Endothelial cell of umbilical vein (primary cell): ENCODE measurements at regions of chr3 and their contacts with region 1.

Region 1: DNA sequence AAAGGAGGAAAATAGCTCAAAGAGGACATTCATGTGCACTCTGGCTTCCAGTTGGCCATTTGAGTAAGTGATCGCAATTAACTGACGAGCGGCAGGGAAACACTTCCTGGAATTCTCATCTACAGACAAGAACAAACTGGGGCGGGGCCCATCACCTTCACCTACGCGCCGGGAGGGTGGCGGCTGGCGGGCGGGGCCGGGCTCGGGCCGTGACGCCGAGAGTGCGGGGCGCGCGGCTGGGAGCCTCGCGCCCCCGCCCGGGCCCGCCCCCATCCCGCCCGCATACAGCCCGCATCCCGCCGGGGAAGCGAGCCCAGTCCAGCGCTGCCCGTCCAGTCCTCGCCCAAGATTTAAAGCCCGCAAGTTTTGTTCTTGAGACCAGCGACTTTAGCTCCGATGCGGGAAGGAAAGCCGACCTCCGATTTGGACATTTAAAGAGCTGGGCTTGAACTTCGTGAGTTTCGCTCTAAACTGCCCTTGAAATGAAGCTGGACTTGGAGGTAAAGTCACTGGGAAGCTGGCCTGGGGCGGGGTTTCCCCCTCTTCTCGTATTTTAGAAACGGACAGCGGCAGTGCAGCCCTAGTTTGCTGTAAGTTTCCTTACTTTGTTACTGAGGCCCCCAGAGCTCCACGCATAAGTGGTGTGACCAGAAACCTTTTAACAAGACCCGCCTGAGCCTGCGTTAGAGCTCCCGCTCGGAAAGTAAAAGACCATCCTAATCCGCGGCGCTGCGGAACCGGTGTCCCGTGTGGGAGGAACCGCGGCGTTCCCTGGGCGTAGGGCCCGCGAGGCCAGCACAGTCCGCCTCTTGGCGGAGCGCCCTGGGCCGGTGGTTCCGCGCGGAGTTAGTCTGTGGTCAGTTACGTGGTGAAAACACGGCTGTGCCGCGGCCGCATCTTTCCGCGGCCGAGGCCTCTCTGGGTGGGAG is at the start of gene B3GNT5:
- DNase-seq: peak; percentile 71
- H3K4me3 ChIP-seq: peak within 1 kb of the TSS; percentile 51 to 75 (median 62)
- H3K27ac ChIP-seq: peak within 1 kb of the TSS; percentile 54
- H3K4me1 ChIP-seq: peaks cover 13% of the 10 kb centered on the region
- H3K27me3 ChIP-seq: no peaks in the 10 kb centered on the region
- CTCF ChIP-seq: no peak
- POLR2A ChIP-seq: no peak
- total RNA-seq, gene B3GNT5: 25.6 and 29.4 TPM in 2 replicates

Region 2: DNA sequence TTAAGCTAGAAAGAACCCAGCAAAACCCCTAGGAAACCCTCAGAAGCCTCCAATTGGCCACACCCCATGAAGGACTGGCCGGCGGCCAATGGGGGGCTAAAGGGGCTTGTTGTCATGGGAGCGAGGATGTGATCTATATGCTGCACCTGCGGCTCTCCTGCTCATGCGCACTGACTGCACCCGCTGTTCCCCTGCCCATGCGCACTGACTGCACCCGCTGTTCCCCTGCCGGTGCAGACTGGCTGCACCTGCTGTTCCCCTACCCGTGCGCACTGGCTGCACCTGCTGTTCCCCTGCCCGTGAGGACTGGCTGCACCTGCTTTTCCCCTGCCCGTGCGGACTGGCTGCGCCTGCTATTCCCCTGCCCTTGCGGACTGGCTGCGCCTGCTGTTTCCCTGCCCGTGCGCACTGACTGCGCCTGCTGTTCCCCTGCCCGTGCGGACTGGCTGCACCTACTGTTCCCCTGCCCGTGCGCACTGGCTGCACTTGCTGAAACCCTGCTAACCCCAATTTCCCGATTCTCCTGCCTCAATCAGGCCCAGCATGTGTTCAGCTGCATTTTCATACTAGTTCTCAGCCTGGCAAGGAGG is 137.1 kb before region 1 on chr3:
- CTCF ChIA-PET with region 1: no interaction called
- POLR2A ChIA-PET with region 1: no interaction called
- dilution Hi-C with region 1: no loop called
- intact Hi-C with region 1: no loop called
- DNase-seq: peak; percentile 41
- H3K4me3 ChIP-seq: peak overlapping the region in 1 of 3 experiments; percentile 20
- H3K27ac ChIP-seq: no peak overlapping the region
- H3K4me1 ChIP-seq: no peaks in the 10 kb centered on the region
- H3K27me3 ChIP-seq: peaks cover 19 to 36% of the 10 kb centered on the region in 2 experiments
- CTCF ChIP-seq: no peak
- POLR2A ChIP-seq: no peak

Region 3: DNA sequence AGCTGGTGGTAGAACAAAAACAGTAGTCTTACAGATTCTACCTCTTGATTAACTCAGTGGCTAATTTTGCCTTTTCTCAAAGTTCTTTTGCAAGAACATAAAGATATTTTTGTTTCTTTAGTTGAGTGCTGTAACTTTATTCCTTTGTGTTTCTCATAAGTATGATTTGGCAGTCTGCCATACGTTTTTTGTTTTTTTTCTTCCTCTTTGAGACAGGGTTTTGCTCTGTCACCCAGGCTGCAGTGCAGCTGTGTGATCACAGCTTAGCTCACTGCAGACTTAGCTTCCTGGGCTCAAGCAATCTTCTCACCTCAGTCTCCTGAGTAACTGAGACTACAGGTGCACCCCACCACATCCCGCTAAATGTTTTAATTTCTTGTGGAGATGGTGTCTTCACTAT is 22.2 kb after region 1 on chr3:
- CTCF ChIA-PET with region 1: interaction called, 3 read pairs
- POLR2A ChIA-PET with region 1: no interaction called
- dilution Hi-C with region 1: no loop called
- intact Hi-C with region 1: loop called (anchors 1 kb)
- DNase-seq: peak; percentile 82
- H3K4me3 ChIP-seq: no peak overlapping the region
- H3K27ac ChIP-seq: peak overlapping the region; percentile 54
- H3K4me1 ChIP-seq: peaks cover 27% of the 10 kb centered on the region
- H3K27me3 ChIP-seq: no peaks in the 10 kb centered on the region
- CTCF ChIP-seq: no peak
- POLR2A ChIP-seq: no peak

Region 4: DNA sequence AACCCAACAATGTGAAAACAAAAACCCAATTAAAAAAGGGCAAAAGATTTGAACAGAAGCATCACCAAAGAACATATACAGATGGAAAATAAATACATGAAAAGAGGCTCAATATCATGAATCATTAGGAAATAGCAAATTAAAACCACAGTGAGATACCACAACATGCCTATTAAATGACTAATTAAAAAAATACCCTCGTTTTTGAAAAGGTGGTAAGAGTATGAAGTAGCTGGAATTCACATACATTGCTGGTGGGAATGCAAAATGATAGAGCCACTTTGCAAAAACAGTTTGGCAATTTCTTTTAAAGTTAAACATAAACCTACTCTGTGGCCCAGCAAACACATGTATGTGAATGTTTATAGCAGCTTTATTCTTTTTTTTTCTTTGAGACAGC is 75.6 kb after region 1 on chr3:
- CTCF ChIA-PET with region 1: no interaction called
- POLR2A ChIA-PET with region 1: no interaction called
- dilution Hi-C with region 1: no loop called
- intact Hi-C with region 1: loop called (anchors 2 kb)
- DNase-seq: no peak
- H3K4me3 ChIP-seq: no peak overlapping the region
- H3K27ac ChIP-seq: no peak overlapping the region
- H3K4me1 ChIP-seq: peaks cover 24% of the 10 kb centered on the region
- H3K27me3 ChIP-seq: no peaks in the 10 kb centered on the region
- CTCF ChIP-seq: no peak
- POLR2A ChIP-seq: no peak